ENCODE measurements at regions of chr15 and their contacts with region 1.

Region 1: GRCh38 chr15:85582131-85583079 is 202.0 kb downstream of the AKAP13 start:
- DNase-seq: peak; percentile 79
- H3K4me3 Mint-ChIP-seq: peak overlapping the region; percentile 86
- H3K27ac Mint-ChIP-seq: peak overlapping the region; percentile 93
- H3K4me1 Mint-ChIP-seq: peaks cover 79% of the 10 kb centered on the region
- H3K27me3 Mint-ChIP-seq: no peaks in the 10 kb centered on the region

Region 2: DNA sequence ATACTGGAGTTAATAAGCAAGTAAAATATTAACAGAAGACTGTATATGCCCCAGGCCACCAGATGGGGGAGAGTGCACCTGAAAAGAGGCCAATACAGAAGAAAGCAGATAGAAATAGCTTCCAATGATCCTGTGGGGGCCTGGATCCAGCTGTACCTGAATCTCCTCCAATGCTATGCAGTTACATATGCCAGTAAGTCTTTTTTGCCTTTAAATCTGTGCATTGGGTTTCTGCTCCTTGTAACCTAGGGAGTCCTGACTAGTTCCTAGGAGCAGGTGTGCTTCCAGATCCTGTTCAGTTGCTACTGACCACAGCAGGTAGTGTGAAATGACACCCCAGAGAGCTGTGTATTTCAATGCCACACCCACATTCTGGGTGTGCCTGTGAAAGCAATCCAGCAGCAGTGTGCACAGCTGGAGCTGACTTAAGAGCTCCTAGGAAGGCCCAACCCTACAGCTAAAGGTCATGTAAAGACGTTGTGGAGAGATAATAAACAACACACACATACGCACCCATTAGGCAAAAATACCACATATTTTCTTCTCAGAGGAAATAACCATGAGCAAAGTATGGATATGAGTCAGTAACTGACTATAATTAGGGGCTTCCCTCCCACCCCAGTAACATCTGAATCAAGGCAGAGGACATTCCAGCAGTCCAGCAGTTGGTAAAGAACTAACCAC is 264.2 kb before region 1 on chr15:
- CTCF ChIA-PET with region 1: no interaction called
- POLR2A ChIA-PET with region 1: no interaction called
- intact Hi-C with region 1: loop called (anchors 5 kb)
- DNase-seq: peak; percentile 50
- H3K4me3 Mint-ChIP-seq: no peak overlapping the region
- H3K27ac Mint-ChIP-seq: peak overlapping the region; percentile 28
- H3K4me1 Mint-ChIP-seq: peaks cover 49% of the 10 kb centered on the region
- H3K27me3 Mint-ChIP-seq: no peaks in the 10 kb centered on the region

Region 3: GRCh38 chr15:85485956-85486567 is 96.3 kb before region 1 on chr15:
- CTCF ChIA-PET with region 1: interaction called, 4 read pairs
- POLR2A ChIA-PET with region 1: interaction called, 8 read pairs
- intact Hi-C with region 1: loop called (anchors 1 kb)
- DNase-seq: peak; percentile 41
- H3K4me3 Mint-ChIP-seq: no peak overlapping the region
- H3K27ac Mint-ChIP-seq: peak overlapping the region; percentile 32
- H3K4me1 Mint-ChIP-seq: peaks cover 69% of the 10 kb centered on the region
- H3K27me3 Mint-ChIP-seq: no peaks in the 10 kb centered on the region

Region 4: GRCh38 chr15:85597155-85597815 is 14.9 kb after region 1 on chr15:
- CTCF ChIA-PET with region 1: interaction called, 3 read pairs
- POLR2A ChIA-PET with region 1: interaction called, 3 read pairs
- intact Hi-C with region 1: loop called (anchors 1 kb)
- DNase-seq: peak; percentile 50
- H3K4me3 Mint-ChIP-seq: peak overlapping the region; percentile 14
- H3K27ac Mint-ChIP-seq: peak overlapping the region; percentile 48
- H3K4me1 Mint-ChIP-seq: peaks cover 59% of the 10 kb centered on the region
- H3K27me3 Mint-ChIP-seq: no peaks in the 10 kb centered on the region

Region 5: DNA sequence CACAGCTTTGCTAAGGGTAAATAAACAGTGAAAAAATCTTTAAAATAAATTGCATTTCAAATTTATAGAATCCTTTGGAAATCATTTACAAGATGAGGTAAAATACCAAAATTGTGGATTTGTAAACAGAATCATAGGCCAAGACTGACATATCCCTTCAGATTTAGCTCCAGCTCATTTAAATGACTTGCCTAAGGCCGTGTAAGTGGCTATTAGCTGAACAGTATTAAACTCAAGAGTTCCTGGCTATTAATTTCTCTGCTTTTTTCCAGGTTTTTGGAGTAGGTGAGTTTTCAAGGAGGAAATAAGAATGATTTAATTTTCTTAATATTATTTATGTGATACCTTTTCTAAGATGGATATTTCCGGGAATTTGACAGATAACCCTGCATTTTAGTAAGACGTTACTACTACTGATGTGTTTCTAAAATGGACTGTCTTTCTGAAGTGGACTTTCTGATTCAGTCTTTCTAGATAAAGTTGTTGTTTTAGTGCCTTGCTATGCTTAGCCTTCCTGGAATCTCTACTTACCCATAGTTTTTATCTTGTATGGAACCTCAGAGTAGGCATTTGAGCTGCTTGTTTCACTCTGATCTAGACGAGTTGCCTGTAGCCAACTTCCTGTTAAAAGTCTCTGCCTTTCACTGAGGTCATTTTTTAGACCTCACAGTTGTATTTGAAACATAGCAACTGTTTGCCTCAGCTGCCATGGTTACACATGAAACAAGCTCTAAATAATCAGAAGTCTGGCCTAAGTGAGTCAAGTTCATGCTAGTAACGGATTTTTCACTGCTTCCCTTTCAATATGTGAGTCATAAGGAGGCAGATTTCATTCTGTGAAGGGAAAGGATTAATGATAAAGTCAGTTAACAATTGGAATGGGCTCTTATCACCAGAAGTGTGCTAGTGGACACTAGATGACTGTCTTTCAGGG is 85.4 kb after region 1 on chr15:
- CTCF ChIA-PET with region 1: interaction called, 9 read pairs
- POLR2A ChIA-PET with region 1: interaction called, 13 read pairs
- intact Hi-C with region 1: loop called (anchors 1 kb)
- DNase-seq: peak; percentile 62
- H3K4me3 Mint-ChIP-seq: peak overlapping the region; percentile 20
- H3K27ac Mint-ChIP-seq: peak overlapping the region; percentile 95
- H3K4me1 Mint-ChIP-seq: peaks cover 33% of the 10 kb centered on the region
- H3K27me3 Mint-ChIP-seq: no peaks in the 10 kb centered on the region

Region 6: DNA sequence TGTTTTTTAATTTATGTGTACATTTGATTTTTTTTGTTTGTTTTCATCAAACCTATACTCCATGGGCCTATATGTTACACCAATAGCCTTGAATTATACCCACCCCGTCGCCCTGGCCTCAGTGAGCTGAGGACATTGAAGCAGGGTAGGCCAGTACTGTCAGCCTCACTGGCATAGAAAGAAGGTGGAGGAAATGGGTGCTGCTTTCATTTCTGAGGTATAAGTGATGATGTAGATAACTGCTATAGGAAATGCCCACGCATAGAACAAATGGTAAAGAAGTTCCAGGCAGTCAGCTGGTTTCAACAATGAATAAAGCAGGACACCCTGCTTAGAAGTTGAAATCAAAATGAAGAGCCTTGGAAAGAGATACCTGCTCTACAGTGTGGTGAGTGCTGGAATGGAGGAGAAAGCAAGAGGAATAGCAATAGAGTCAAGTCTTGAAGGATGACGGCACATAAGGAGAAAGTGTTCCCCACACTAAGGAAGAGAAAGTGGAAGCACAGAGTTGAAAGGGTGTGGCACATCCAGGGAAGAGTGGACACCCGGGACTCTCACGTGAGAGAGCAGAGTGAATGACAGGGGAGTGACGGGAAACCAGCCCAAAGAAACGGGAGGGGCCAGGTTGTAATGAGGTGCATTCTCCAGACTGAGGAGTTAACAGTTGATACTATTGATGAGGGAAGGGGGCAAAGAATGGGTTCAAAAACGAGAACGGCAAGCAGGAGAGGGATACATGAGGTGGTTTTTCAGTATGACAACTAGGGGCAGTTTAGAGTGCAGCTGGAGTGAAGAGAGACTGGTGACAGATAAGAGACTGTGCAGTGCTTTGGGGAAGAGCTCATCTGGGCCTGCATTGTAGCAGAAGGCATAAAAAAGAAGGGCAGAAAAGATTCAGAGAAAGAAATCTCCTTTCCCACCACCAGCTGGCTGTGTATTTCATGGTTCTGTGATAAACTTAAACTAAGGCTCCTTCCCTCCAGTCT is 141.8 kb after region 1 on chr15:
- CTCF ChIA-PET with region 1: no interaction called
- POLR2A ChIA-PET with region 1: no interaction called
- intact Hi-C with region 1: loop called (anchors 1 kb)
- DNase-seq: peak; percentile 44
- H3K4me3 Mint-ChIP-seq: peak overlapping the region; percentile 58
- H3K27ac Mint-ChIP-seq: peak overlapping the region; percentile 93
- H3K4me1 Mint-ChIP-seq: peaks cover 64% of the 10 kb centered on the region
- H3K27me3 Mint-ChIP-seq: no peaks in the 10 kb centered on the region

Measured in activated CD4-positive, alpha-beta memory T cell treated with anti-CD3 and anti-CD28 coated beads for 36 hours (primary cell).